ENCODE measurements at regions of chr1 and their contacts with region 1.

Region 1: DNA sequence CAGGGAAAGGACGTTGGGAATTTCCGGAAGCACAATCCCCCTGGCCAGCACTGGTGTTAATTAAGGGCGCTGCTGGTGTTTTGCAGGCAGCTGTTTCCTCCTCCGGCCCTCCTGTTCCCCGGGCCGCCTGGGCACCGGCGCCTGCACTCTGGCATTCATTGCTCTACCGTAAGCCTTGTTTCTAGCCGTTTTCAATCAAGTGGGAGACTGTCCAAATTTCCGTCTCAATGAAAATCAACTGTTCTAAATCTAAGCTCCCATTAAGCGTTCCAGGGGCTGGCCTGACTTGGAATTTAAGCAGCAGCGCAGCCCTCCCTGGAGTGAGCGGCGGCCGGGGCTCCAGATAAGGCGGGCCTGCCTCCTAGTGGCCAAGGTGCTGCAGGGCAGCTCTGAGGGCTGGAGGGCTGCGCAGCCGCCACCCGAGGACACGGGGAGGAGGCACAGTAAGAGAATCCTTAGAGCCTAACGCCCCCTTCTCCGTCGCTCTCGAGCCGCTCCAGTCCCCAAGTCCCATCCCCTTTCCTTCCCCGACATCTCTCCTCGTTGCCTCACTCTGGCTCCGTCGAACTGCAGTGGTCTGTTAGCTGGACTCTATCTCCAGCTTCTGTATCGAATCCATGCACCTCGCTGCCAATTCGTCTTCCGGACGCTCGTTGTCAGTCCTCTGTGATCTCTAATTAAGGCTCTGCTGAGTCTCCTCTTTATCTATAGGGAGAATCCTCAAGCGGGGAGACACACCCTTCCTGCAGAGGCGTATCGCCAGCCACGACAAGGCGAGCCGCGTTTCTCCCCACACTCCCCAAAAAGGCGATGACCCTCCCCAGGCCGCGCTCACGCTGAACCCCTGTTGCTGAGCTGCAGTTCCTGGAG is 57.8 kb upstream of the LRRC8D start:
- DNase-seq: peak; percentile 79
- ATAC-seq: peak; percentile 100
- H3K4me3 Mint-ChIP-seq: peak overlapping the region; percentile 87
- H3K27ac Mint-ChIP-seq: peak overlapping the region; percentile 70
- H3K4me1 Mint-ChIP-seq: peaks cover 18% of the 10 kb centered on the region
- H3K27me3 Mint-ChIP-seq: peaks cover 4% of the 10 kb centered on the region
- CTCF ChIP-seq: peak; percentile 52

Region 2: DNA sequence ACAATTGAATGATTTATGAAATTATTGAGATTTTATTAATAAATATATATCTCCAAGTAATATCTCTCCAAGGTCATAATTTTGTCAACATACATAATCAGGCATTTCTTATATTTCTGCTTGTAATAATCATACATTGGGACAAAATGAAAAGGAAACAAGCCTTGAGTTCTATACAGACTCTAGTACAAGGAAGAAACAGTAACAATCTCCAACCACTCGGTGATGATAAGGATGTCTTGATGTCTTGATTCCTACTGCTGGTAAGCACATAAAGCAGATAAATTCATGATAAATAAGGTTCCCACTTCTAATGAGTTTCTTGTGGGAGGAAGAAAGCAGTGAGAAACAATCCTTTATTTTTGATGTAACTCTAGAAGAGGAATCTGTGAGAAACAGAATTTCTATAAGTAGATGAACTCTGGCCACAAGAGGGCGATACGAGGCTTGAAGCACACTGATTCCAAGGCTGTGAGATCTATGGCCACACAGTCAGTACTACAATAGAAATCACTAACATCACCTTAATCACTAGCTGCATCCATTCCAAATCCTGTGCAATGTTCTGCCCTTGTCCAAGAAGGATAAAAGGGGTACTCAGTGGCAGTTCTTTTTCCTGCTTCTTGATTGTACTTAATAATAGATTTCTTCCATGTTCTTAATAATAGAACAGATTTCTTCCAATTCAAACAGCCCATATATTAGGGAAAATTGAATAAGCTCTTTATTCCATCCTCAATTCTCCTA is 279.8 kb before region 1 on chr1:
- CTCF ChIA-PET with region 1: interaction called, 49 read pairs
- POLR2A ChIA-PET with region 1: interaction called, 3 read pairs
- intact Hi-C with region 1: loop called (anchors 1 kb)
- DNase-seq: no peak
- ATAC-seq: peak; percentile 74
- H3K4me3 Mint-ChIP-seq: no peak overlapping the region
- H3K27ac Mint-ChIP-seq: no peak overlapping the region
- H3K4me1 Mint-ChIP-seq: no peaks in the 10 kb centered on the region
- H3K27me3 Mint-ChIP-seq: peaks cover 4% of the 10 kb centered on the region
- CTCF ChIP-seq: no peak

Region 3: DNA sequence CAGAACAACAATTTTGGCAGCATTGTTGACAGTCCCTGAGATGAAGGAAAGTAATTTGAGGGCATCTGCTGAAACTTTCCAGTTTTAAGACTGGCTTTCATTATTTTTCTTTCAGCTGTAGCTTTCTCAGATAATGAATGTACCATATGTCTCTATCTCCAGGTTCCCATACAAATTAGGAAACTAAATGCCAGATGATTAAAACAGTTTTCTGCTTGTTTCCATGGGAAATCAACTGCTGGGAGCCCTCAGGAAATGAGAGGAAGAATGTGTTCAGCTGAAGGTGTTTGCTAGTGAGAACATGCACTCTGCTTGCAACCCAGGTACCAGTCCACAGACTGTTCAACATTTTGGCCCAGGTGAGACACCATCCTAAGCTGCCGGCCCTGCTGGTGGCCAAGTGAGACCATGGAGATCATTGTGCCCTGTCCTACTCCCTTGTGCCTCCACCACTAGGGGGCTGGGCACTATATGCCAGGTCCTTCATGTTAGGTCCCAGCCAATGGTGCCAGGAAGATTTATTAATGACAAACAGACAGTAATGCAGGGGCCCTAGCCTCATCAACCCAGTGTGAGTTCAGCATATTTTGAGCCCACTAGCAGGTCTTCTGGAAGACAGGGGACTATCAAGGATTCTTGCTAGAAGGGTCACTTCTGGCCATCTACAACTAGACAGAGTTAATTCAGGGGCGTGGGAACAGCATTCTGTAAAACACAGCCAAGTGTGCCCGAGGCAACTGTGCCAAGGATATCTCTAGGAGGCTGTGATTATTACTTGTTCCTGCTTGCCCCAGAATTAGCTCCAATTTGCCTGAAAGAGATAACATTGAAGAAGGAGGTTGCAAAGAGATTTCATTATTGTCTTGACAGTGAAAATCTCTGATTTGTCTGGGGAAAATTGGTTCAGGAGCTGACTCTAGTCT is 147.1 kb before region 1 on chr1:
- CTCF ChIA-PET with region 1: interaction called, 37 read pairs
- POLR2A ChIA-PET with region 1: no interaction called
- intact Hi-C with region 1: loop called (anchors 1 kb)
- DNase-seq: no peak
- ATAC-seq: peak; percentile 72
- H3K4me3 Mint-ChIP-seq: no peak overlapping the region
- H3K27ac Mint-ChIP-seq: no peak overlapping the region
- H3K4me1 Mint-ChIP-seq: peaks cover 12% of the 10 kb centered on the region
- H3K27me3 Mint-ChIP-seq: no peaks in the 10 kb centered on the region
- CTCF ChIP-seq: no peak

Region 4: GRCh38 chr1:89670163-89670562 is 92.9 kb before region 1 on chr1:
- CTCF ChIA-PET with region 1: interaction called, 14 read pairs
- POLR2A ChIA-PET with region 1: interaction called, 7 read pairs
- intact Hi-C with region 1: loop called (anchors 1 kb)
- DNase-seq: no peak
- ATAC-seq: peak; percentile 90
- H3K4me3 Mint-ChIP-seq: peak overlapping the region; percentile 16
- H3K27ac Mint-ChIP-seq: peak overlapping the region; percentile 69
- H3K4me1 Mint-ChIP-seq: peaks cover 45% of the 10 kb centered on the region
- H3K27me3 Mint-ChIP-seq: no peaks in the 10 kb centered on the region
- CTCF ChIP-seq: no peak

Region 5: GRCh38 chr1:89719502-89720306 is 43.3 kb before region 1 on chr1:
- CTCF ChIA-PET with region 1: interaction called, 29 read pairs
- POLR2A ChIA-PET with region 1: interaction called, 6 read pairs
- intact Hi-C with region 1: loop called (anchors 1 kb)
- DNase-seq: no peak
- ATAC-seq: peak; percentile 92
- H3K4me3 Mint-ChIP-seq: peak overlapping the region; percentile 72
- H3K27ac Mint-ChIP-seq: peak overlapping the region; percentile 96
- H3K4me1 Mint-ChIP-seq: peaks cover 56% of the 10 kb centered on the region
- H3K27me3 Mint-ChIP-seq: no peaks in the 10 kb centered on the region
- CTCF ChIP-seq: no peak

Region 6: GRCh38 chr1:89821322-89822108 is 58.5 kb after region 1 on chr1:
- CTCF ChIA-PET with region 1: no interaction called
- POLR2A ChIA-PET with region 1: no interaction called
- intact Hi-C with region 1: no loop called
- DNase-seq: peak; percentile 76
- ATAC-seq: peak; percentile 67
- H3K4me3 Mint-ChIP-seq: peak overlapping the region; percentile 95
- H3K27ac Mint-ChIP-seq: peak overlapping the region; percentile 96
- H3K4me1 Mint-ChIP-seq: peaks cover 43% of the 10 kb centered on the region
- H3K27me3 Mint-ChIP-seq: no peaks in the 10 kb centered on the region
- CTCF ChIP-seq: no peak